Caco-2 (cell line): ENCODE measurements at regions of chr2 and their contacts with region 1.

Region 1: DNA sequence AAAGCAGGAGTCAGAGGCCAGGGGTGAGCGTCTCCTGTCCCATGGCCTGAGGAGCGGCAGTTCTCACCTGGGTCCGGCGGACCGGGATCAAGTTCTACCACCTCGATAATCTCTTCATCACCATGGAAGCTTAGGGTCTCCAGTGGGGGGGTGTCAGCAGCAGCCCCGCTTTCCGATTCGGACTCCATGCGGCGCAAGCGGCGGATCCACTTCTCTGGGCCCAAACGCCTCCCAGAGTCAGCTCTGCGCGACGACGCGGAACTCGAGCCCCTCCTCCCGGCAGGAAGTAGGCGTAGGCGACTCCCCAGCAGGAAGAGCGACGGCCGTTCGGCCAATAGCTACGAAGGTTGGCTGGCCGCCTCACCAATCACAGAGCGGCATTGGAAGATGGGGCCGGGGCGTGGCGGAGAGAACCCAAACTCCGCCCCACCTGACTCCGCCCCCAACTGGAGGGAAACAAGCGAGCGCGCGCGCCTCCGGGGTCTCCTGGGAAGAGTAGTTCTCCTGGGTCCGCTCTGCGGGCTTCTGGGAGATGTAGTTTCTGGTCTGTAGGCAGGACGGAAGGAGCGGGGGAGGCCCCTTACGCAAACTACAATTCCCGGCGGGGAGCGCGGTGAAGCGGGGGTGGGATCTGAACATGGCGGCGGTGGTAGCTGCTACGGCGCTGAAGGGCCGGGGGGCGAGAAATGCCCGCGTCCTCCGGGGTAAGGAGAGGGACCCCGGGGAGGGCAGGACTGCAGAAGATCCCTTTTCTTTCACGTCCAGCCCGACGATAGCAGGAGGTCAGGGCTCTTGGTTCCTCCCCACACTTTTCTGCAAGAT is at the starts of genes AAMP and PNKD:
- DNase-seq: peak; percentile 100
- H3K4me3 ChIP-seq: peak within 1 kb of the TSS; percentile 65
- H3K4me3 Mint-ChIP-seq: peak within 1 kb of the TSS; percentile 91
- H3K27ac Mint-ChIP-seq: peak within 1 kb of the TSS; percentile 93
- H3K4me1 ChIP-seq: peaks cover 7% of the 10 kb centered on the region
- H3K4me1 Mint-ChIP-seq: peaks cover 13% of the 10 kb centered on the region
- H3K27me3 ChIP-seq: no peaks in the 10 kb centered on the region
- H3K27me3 Mint-ChIP-seq: no peaks in the 10 kb centered on the region
- CTCF ChIP-seq: peak in 1 of 2 experiments; percentile 23
- total RNA-seq, gene AAMP: 118 and 125 TPM in 2 replicates
- total RNA-seq, gene PNKD: 39.2 and 42.9 TPM in 2 replicates

Region 2: GRCh38 chr2:218216674-218217359 is 53.3 kb before region 1 on chr2 and contains the start of gene ARPC2:
- CTCF ChIA-PET with region 1: interaction called, 5 read pairs
- POLR2A ChIA-PET with region 1: interaction called, 3 read pairs
- intact Hi-C with region 1: loop called (anchors 1 kb)
- DNase-seq: peak; percentile 92 to 95
- H3K4me3 ChIP-seq: peak within 1 kb of the TSS; percentile 87
- H3K4me3 Mint-ChIP-seq: peak within 1 kb of the TSS; percentile 93
- H3K27ac Mint-ChIP-seq: peak within 1 kb of the TSS; percentile 92
- H3K4me1 ChIP-seq: peaks cover 30% of the 10 kb centered on the region
- H3K4me1 Mint-ChIP-seq: peaks cover 26% of the 10 kb centered on the region
- H3K27me3 ChIP-seq: no peaks in the 10 kb centered on the region
- H3K27me3 Mint-ChIP-seq: no peaks in the 10 kb centered on the region
- CTCF ChIP-seq: no peak
- total RNA-seq, gene ARPC2: 284 and 290 TPM in 2 replicates

Region 3: GRCh38 chr2:218292048-218293014 is 22.2 kb after region 1 on chr2 and contains the start of gene TMBIM1:
- CTCF ChIA-PET with region 1: interaction called, 121 read pairs
- POLR2A ChIA-PET with region 1: interaction called, 20 read pairs
- intact Hi-C with region 1: loop called (anchors 1 kb)
- DNase-seq: peak; percentile 75 to 94
- H3K4me3 ChIP-seq: peak within 1 kb of the TSS; percentile 97
- H3K4me3 Mint-ChIP-seq: peak within 1 kb of the TSS; percentile 86
- H3K27ac Mint-ChIP-seq: peak within 1 kb of the TSS; percentile 100
- H3K4me1 ChIP-seq: peaks cover 83% of the 10 kb centered on the region
- H3K4me1 Mint-ChIP-seq: peaks cover 56% of the 10 kb centered on the region
- H3K27me3 ChIP-seq: no peaks in the 10 kb centered on the region
- H3K27me3 Mint-ChIP-seq: no peaks in the 10 kb centered on the region
- CTCF ChIP-seq: peak; percentile 49 to 95
- total RNA-seq, gene TMBIM1: 168 and 175 TPM in 2 replicates

Region 4: DNA sequence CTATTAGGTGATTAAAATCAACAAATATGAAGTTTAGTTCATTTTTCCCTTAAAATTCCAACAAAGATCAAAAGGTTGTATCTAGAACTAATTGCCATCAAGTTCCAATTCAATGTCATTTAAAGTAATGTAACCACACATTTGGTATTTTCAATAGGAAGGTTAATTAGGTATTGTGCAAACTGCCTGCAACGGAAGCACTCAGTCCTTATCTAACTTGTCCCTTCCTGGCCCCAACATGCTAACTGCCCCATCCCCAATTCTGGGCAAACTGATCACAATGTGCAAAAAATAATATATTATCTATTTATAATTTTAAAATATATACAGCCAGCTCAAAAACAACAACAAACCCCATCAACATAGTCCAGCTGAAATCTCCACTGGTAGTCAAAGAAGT is 182.0 kb after region 1 on chr2:
- CTCF ChIA-PET with region 1: no interaction called
- POLR2A ChIA-PET with region 1: no interaction called
- intact Hi-C with region 1: no loop called
- DNase-seq: no peak
- H3K4me3 ChIP-seq: no peak overlapping the region
- H3K4me3 Mint-ChIP-seq: no peak overlapping the region
- H3K27ac Mint-ChIP-seq: no peak overlapping the region
- H3K4me1 ChIP-seq: peaks cover 30% of the 10 kb centered on the region
- H3K4me1 Mint-ChIP-seq: peaks cover 27% of the 10 kb centered on the region
- H3K27me3 ChIP-seq: no peaks in the 10 kb centered on the region
- H3K27me3 Mint-ChIP-seq: no peaks in the 10 kb centered on the region
- CTCF ChIP-seq: no peak

Region 5: GRCh38 chr2:218466016-218466521 is 196.0 kb after region 1 on chr2:
- CTCF ChIA-PET with region 1: interaction called, 4 read pairs
- POLR2A ChIA-PET with region 1: no interaction called
- intact Hi-C with region 1: loop called (anchors 1 kb)
- DNase-seq: no peak
- H3K4me3 ChIP-seq: no peak overlapping the region
- H3K4me3 Mint-ChIP-seq: no peak overlapping the region
- H3K27ac Mint-ChIP-seq: no peak overlapping the region
- H3K4me1 ChIP-seq: no peaks in the 10 kb centered on the region
- H3K4me1 Mint-ChIP-seq: no peaks in the 10 kb centered on the region
- H3K27me3 ChIP-seq: no peaks in the 10 kb centered on the region
- H3K27me3 Mint-ChIP-seq: no peaks in the 10 kb centered on the region
- CTCF ChIP-seq: peak; percentile 21 to 52